Endothelial cell of umbilical vein (primary cell): ENCODE measurements at regions of chr13 and their contacts with region 1.

Region 1: DNA sequence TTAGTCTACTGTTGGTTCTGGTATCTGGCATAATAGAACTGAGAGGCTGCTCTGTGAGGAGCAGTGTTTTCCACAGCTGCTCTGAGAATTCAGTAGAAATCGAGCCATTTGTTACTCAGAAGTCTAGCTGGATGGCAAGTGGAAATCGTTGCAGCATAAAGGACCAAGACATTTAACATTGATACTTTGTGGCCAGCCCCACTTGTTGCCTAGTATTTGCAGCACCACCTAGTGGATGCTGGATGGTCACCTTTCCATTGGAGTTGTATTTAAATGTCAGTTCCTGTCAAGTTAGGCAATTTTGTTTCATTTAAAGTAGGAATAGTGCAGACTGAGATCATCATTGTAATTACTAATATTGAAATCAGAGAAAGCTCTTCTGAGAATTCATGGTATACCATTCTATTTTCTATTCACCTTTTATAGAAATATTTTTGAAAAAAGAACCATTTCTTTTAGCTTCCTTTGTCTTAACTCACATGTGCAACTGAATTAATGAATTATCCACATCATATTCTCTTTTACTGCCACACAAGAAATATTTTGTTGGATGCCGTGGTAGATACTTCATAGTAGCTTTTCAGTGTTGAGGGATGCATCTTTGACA is 64.6 kb downstream of the PDS5B start:
- DNase-seq: peak; percentile 77
- H3K4me3 ChIP-seq: no peak overlapping the region
- H3K27ac ChIP-seq: no peak overlapping the region
- H3K4me1 ChIP-seq: no peaks in the 10 kb centered on the region
- H3K27me3 ChIP-seq: no peaks in the 10 kb centered on the region
- CTCF ChIP-seq: peak; percentile 73 to 78
- POLR2A ChIP-seq: no peak

Region 2: DNA sequence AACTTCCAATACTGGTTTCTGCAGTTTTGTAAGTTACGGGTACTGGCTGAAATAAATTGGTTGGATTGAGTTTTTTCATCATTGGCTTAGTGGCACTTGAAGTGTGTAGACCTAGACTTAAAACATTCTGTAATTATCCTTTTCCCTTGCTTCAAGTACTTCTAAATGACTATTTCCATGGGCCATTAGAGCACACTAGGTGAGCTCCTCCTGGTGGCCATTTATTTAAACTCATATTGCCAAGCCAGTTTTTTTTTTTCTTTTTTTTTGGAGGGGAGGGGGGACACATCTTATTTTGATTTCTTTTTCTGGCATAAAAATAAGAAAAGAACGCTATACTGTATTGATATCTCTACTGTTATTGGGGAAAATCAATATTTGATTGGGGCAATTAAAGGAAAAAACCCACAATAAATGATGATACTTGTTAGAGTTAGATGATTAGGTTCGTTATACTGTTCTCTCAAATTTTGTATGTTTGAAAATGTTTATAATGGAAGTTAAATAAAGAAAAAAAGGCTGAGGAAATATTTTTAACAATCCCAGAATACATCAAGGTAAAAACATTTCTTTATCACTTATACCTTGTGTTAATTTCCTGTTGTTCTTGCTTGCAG is 18.3 kb after region 1 on chr13:
- CTCF ChIA-PET with region 1: interaction called, 32 read pairs
- POLR2A ChIA-PET with region 1: no interaction called
- dilution Hi-C with region 1: no loop called
- intact Hi-C with region 1: no loop called
- DNase-seq: peak; percentile 61
- H3K4me3 ChIP-seq: no peak overlapping the region
- H3K27ac ChIP-seq: no peak overlapping the region
- H3K4me1 ChIP-seq: no peaks in the 10 kb centered on the region
- H3K27me3 ChIP-seq: no peaks in the 10 kb centered on the region
- CTCF ChIP-seq: peak; percentile 44 to 54
- POLR2A ChIP-seq: no peak